ENCODE measurements at regions of chr19 and their contacts with region 1.

Region 1: DNA sequence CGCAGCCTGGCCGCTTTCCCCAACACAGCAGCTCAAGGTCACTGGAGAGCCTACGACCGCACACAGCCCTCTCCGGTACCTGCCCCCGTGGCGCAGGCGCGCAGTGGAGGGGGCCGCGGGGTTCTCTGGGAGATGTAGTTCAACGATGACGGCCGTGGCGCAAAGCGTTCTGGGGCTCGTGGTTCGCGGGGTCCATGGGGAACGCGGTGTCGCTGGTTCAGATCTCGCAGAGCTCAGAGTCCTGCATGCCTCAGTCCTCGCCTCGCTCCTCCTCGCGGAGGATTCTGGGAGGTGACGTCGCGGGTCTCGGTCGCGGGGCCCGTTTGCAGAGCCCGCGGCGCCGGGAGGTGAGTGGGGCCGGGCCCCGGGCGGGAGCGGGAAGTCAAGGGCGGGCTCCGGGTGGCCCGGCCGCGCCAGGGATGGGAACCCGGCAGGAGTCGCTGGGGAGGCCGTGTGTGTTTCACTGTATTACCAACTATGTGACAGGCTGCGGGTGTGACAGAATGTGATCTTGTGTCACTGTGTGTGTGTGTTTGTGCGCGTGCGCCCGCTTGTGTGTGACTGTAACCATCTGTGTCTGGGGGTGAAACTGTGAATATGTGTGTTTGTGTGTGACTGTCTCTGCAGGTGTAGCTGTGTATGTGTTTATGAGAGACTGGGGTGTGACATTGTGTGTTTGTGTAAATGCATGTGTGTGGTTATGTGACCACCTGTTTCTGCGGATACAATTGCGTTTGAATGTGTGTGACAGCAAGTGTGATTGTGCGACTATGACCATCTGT is at the start of gene ZNF527:
- DNase-seq: peak; percentile 98
- ATAC-seq: peak; percentile 99
- H3K4me3 Mint-ChIP-seq: peak within 1 kb of the TSS; percentile 85
- H3K27ac Mint-ChIP-seq: peak within 1 kb of the TSS; percentile 95
- H3K4me1 Mint-ChIP-seq: peaks cover 10% of the 10 kb centered on the region
- H3K27me3 Mint-ChIP-seq: no peaks in the 10 kb centered on the region
- total RNA-seq, gene ZNF527: 5.0 to 5.4 TPM

Region 2: GRCh38 chr19:36489118-36489919 is 881.8 kb before region 1 on chr19 and contains the start of gene ZNF566:
- CTCF ChIA-PET with region 1: no interaction called
- POLR2A ChIA-PET with region 1: no interaction called
- intact Hi-C with region 1: loop called in 1 of 2 experiments (anchors 2 kb)
- DNase-seq: peak; percentile 97
- ATAC-seq: peak; percentile 93
- H3K4me3 Mint-ChIP-seq: peak within 1 kb of the TSS; percentile 86
- H3K27ac Mint-ChIP-seq: peak within 1 kb of the TSS; percentile 98
- H3K4me1 Mint-ChIP-seq: peaks cover 24% of the 10 kb centered on the region
- H3K27me3 Mint-ChIP-seq: no peaks in the 10 kb centered on the region
- total RNA-seq, gene ZNF566: 4.7 to 5.9 TPM

Region 3: GRCh38 chr19:36687214-36688056 is 683.6 kb before region 1 on chr19 and contains the start of gene ZNF567:
- CTCF ChIA-PET with region 1: no interaction called
- POLR2A ChIA-PET with region 1: interaction called, 4 read pairs
- intact Hi-C with region 1: loop called in 1 of 2 experiments (anchors 2 kb)
- DNase-seq: peak; percentile 99
- ATAC-seq: peak; percentile 93
- H3K4me3 Mint-ChIP-seq: peak within 1 kb of the TSS; percentile 99
- H3K27ac Mint-ChIP-seq: peak within 1 kb of the TSS; percentile 96
- H3K4me1 Mint-ChIP-seq: peaks cover 27% of the 10 kb centered on the region
- H3K27me3 Mint-ChIP-seq: no peaks in the 10 kb centered on the region
- total RNA-seq, gene ZNF567: 7.4 to 8.6 TPM

Region 4: GRCh38 chr19:37077934-37078725 is 292.9 kb before region 1 on chr19 and contains the start of gene ZNF420:
- CTCF ChIA-PET with region 1: no interaction called
- POLR2A ChIA-PET with region 1: no interaction called
- intact Hi-C with region 1: loop called in 1 of 2 experiments (anchors 1 kb)
- DNase-seq: peak; percentile 93
- ATAC-seq: peak; percentile 95
- H3K4me3 Mint-ChIP-seq: peak within 1 kb of the TSS; percentile 97
- H3K27ac Mint-ChIP-seq: peak within 1 kb of the TSS; percentile 98
- H3K4me1 Mint-ChIP-seq: peaks cover 23% of the 10 kb centered on the region
- H3K27me3 Mint-ChIP-seq: no peaks in the 10 kb centered on the region
- total RNA-seq, gene ZNF420: 9.1 to 12.8 TPM

Region 5: GRCh38 chr19:37466798-37467607 is 95.9 kb after region 1 on chr19 and contains the start of gene ZNF569:
- CTCF ChIA-PET with region 1: no interaction called
- POLR2A ChIA-PET with region 1: interaction called, 8 read pairs
- intact Hi-C with region 1: loop called (anchors 1 to 2 kb)
- DNase-seq: peak; percentile 93
- ATAC-seq: peak; percentile 71
- H3K4me3 Mint-ChIP-seq: peak within 1 kb of the TSS; percentile 94
- H3K27ac Mint-ChIP-seq: peak within 1 kb of the TSS; percentile 95
- H3K4me1 Mint-ChIP-seq: peaks cover 31% of the 10 kb centered on the region
- H3K27me3 Mint-ChIP-seq: no peaks in the 10 kb centered on the region
- total RNA-seq, gene ZNF569: 7.4 to 9.1 TPM

Region 6: GRCh38 chr19:37655689-37656371 is 284.8 kb after region 1 on chr19:
- CTCF ChIA-PET with region 1: interaction called, 3 read pairs
- POLR2A ChIA-PET with region 1: no interaction called
- intact Hi-C with region 1: loop called in 1 of 2 experiments (anchors 1 kb)
- DNase-seq: peak; percentile 93
- ATAC-seq: peak; percentile 79
- H3K4me3 Mint-ChIP-seq: peak overlapping the region; percentile 94
- H3K27ac Mint-ChIP-seq: peak overlapping the region; percentile 99
- H3K4me1 Mint-ChIP-seq: peaks cover 33% of the 10 kb centered on the region
- H3K27me3 Mint-ChIP-seq: no peaks in the 10 kb centered on the region

Region 7: DNA sequence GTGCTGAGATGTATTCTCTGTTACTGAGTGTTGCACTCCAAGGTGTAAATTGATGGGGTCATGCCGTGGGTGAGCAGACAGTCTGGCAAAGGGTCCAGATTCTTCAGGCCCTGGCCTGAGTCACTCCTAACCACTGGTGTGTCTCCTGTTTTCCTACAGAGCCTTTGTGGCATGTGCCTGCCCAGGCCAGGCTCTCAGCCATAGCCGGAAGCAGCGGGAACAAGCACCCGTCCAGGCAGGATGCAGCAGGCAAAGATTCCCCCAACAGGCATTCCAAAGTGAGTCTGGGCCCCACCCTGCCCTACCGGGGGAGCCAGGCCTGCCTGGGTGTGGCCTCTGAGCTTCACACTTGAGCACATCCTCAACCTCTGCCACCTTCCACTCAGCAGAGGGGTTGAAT is 791.0 kb after region 1 on chr19:
- CTCF ChIA-PET with region 1: no interaction called
- POLR2A ChIA-PET with region 1: no interaction called
- intact Hi-C with region 1: no loop called
- DNase-seq: no peak
- ATAC-seq: no peak
- H3K4me3 Mint-ChIP-seq: no peak overlapping the region
- H3K27ac Mint-ChIP-seq: no peak overlapping the region
- H3K4me1 Mint-ChIP-seq: no peaks in the 10 kb centered on the region
- H3K27me3 Mint-ChIP-seq: no peaks in the 10 kb centered on the region

Measured in activated CD4-positive, alpha-beta T cell treated with anti-CD3 and anti-CD28 coated beads for 36 hours (primary cell).